ENCODE measurements at regions of chr16 and their contacts with region 1.

Region 1: DNA sequence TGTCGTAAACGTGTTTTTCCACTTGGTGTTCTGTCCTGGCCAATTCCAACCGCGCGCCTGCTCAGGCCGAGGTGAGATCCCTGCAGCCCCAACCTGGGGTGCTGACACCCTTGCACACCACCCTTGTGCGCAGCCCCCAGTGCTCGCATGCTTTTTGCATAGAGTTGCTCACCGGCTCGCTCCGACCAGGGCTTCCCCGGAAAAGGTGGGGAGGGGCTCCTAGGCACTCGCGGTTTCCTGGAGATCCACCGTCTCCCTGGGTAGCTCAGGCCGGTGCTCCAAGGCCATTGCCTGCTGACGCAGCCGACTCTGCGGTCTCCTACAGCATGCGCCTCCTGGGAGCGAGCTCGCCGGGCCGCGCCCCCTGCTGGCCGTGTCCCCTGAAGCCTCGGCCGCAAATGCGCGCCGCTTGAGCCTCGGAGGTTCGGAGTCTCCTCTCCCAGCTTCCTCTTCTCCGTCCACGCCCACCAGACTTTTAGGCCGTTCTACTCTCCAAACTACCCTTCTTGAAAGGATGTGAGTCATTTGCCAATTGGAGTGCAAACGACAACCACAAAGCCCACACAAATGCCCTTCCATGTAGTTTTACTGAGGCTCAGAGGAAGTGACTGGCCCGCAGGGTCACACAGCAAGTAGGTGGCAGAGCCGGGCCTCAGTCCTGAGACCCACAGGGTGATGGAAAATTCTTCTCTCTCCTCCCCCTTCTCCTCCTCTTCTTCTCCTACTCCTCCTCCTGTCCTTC is 7.2 kb upstream of the PDP2 start:
- DNase-seq: peak; percentile 95
- ATAC-seq: peak; percentile 77
- H3K4me3 Mint-ChIP-seq: peak overlapping the region; percentile 65
- H3K27ac Mint-ChIP-seq: peak overlapping the region; percentile 72
- H3K4me1 Mint-ChIP-seq: peaks cover 48% of the 10 kb centered on the region
- H3K27me3 Mint-ChIP-seq: no peaks in the 10 kb centered on the region

Region 2: DNA sequence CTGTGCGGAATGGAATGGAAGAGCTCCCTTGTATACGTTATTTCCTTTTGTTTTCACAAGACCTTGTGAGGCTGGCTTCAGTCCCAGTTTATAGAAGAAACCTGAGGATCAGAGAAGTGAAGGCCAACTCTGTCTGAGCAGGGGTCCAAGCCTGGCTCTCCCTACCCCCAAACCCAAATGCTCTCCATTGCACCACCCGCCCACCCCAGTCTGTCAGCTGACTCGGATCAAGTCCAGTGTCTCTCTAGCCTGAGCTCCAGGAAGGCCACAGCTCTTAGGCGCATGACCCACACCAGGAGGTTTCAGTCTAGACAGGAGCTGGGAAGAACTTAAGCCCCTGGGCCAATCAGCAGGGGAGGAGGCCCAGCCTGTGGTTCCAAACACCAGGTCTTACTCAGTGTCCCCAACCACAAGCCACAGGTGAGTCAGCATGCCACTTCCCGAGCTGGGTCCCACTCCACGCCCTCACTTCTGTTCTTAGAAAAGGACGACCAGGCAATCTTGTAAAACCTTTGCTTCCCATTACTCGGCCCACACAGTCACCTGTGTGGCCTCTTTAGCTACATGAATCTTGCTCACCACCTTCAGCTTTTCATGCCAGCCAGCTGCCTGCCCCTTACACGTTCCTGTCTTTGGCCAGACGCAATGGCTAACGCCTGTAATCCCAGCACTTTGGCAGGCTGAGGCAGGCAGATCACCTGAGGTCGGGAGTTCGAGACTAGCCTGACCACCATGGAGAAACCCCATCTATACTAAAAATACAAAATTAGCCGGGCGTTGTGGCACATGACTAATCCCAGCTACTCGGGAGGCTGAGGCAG is 351.0 kb before region 1 on chr16:
- CTCF ChIA-PET with region 1: no interaction called
- POLR2A ChIA-PET with region 1: no interaction called
- intact Hi-C with region 1: loop called (anchors 1 to 10 kb)
- DNase-seq: peak; percentile 96
- ATAC-seq: peak; percentile 86
- H3K4me3 Mint-ChIP-seq: peak overlapping the region; percentile 55
- H3K27ac Mint-ChIP-seq: peak overlapping the region; percentile 86
- H3K4me1 Mint-ChIP-seq: peaks cover 83% of the 10 kb centered on the region
- H3K27me3 Mint-ChIP-seq: no peaks in the 10 kb centered on the region

Region 3: GRCh38 chr16:66728117-66728787 is 144.9 kb before region 1 on chr16:
- CTCF ChIA-PET with region 1: interaction called, 7 read pairs
- POLR2A ChIA-PET with region 1: interaction called, 5 read pairs
- intact Hi-C with region 1: loop called in 1 of 2 experiments (anchors 5 kb)
- DNase-seq: no peak
- ATAC-seq: peak; percentile 81
- H3K4me3 Mint-ChIP-seq: no peak overlapping the region
- H3K27ac Mint-ChIP-seq: no peak overlapping the region
- H3K4me1 Mint-ChIP-seq: no peaks in the 10 kb centered on the region
- H3K27me3 Mint-ChIP-seq: no peaks in the 10 kb centered on the region

Region 4: GRCh38 chr16:66844342-66845079 is 28.6 kb before region 1 on chr16 and contains the start of gene CA7:
- CTCF ChIA-PET with region 1: interaction called, 11 read pairs
- POLR2A ChIA-PET with region 1: no interaction called
- intact Hi-C with region 1: no loop called
- DNase-seq: no peak
- ATAC-seq: peak; percentile 33
- H3K4me3 Mint-ChIP-seq: peak within 1 kb of the TSS; percentile 31
- H3K27ac Mint-ChIP-seq: no peak within 1 kb of the TSS
- H3K4me1 Mint-ChIP-seq: peaks cover 7% of the 10 kb centered on the region
- H3K27me3 Mint-ChIP-seq: peaks cover 37% of the 10 kb centered on the region
- total RNA-seq, gene CA7: 0.16 TPM in 1 of 2 experiments, not detected in the other

Region 5: DNA sequence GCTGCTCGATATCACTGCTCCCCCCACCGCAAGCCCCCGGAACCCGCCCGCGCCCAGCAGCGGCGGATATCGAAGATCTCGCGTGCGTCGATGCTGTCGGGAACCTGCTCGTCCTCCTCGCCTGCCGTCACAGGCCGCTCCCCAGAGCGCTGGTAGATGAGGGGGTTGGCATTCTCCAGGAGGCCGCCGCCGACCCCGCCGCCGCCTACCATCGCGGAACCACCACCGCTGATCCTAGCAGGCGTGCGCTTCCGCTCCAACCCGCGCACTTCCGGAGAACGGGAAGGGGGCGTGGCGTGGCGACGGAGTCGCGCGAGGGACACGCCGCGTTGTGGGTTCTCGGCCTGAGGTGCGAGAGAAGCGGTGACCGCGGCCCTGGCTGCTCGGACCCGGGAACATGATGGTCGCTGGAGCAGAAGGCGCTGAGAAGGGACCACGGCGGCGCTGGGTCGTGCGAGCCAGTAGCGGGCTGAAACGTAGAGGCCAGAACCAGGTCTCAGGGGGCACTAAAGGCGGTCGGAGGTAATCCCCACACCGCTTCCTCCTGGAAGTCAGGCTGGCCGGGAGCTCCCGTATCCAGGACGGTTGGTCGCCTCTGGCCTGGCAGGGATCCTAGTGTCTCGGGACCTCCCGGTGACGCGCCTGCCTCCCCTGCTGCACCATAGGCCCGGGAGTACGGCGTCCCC is 61.2 kb after region 1 on chr16 and contains the start of gene CIAO2B:
- CTCF ChIA-PET with region 1: interaction called, 6 read pairs
- POLR2A ChIA-PET with region 1: no interaction called
- intact Hi-C with region 1: loop called (anchors 1 kb)
- DNase-seq: peak; percentile 93
- ATAC-seq: peak; percentile 84
- H3K4me3 Mint-ChIP-seq: peak within 1 kb of the TSS; percentile 99
- H3K27ac Mint-ChIP-seq: peak within 1 kb of the TSS; percentile 96
- H3K4me1 Mint-ChIP-seq: peaks cover 57% of the 10 kb centered on the region
- H3K27me3 Mint-ChIP-seq: no peaks in the 10 kb centered on the region
- total RNA-seq, gene CIAO2B: 171 to 186 TPM